ENCODE measurements at regions of chr5 and their contacts with region 1.

Region 1: DNA sequence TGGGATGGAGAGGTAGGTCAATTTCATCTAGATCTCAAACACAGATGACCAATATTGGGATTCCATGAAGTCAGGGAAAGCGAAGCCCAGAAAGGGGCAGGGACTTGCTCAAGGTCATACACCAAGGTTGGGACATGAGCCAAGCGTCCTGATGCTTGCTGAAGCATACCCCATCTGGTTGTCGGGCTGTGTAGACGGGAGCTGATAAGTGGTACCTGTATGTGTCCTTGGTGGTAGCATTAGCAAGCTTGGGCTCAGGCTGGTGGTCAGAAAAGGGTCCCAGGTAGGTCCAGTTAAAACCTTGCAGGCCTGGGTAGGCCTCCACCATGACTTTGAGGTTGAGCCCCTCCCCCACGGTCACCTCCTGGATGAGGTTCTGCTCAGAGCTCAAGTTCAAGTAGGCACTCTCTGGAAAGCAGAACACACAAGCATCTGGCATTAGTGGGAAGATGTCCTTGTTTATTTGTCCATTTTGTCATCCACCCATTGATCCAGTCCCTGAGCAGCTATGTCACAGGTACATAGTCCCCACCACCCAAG is 13.2 kb downstream of the CSF1R start:
- DNase-seq: no peak
- H3K4me3 ChIP-seq: no peak overlapping the region
- H3K27ac ChIP-seq: no peak overlapping the region
- H3K4me1 ChIP-seq: no peaks in the 10 kb centered on the region
- H3K27me3 ChIP-seq: peaks cover 9% of the 10 kb centered on the region
- CTCF ChIP-seq: no peak

Region 2: DNA sequence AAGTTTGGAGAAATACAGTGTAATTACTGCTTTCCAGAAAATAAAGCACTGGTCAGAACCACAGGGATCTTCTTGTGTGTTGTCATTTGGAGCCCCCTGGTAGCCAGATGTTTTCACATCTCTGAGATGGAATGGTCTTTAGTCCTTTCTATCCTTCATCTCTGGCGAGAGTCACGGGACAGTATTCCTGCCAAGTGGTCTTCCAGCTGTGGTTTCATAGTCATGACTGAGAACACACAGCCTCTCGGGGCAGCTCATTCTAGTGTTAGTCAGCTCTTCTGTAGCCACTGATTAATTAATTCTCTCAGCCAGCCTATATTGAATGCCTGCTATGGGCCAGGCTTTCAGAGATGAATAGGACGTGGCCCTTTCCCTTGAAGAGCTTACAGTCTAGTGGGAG is 38.5 kb before region 1 on chr5:
- dilution Hi-C with region 1: loop called (anchors 5 kb)
- DNase-seq: no peak
- H3K4me3 ChIP-seq: no peak overlapping the region
- H3K27ac ChIP-seq: no peak overlapping the region
- H3K4me1 ChIP-seq: peaks cover 18% of the 10 kb centered on the region
- H3K27me3 ChIP-seq: no peaks in the 10 kb centered on the region
- CTCF ChIP-seq: no peak

Measured in keratinocyte (primary cell).